Calu3 (cell line): ENCODE measurements at regions of chr7 and their contacts with region 1.

Region 1: GRCh38 chr7:73831755-73832651 is 1.2 kb downstream of the CLDN4 start:
- DNase-seq: peak; percentile 91
- H3K4me3 Mint-ChIP-seq: peak overlapping the region; percentile 91
- H3K27ac Mint-ChIP-seq: peak overlapping the region; percentile 92
- H3K4me1 Mint-ChIP-seq: peaks cover 30% of the 10 kb centered on the region
- H3K27me3 Mint-ChIP-seq: no peaks in the 10 kb centered on the region
- CTCF ChIP-seq: no peak

Region 2: DNA sequence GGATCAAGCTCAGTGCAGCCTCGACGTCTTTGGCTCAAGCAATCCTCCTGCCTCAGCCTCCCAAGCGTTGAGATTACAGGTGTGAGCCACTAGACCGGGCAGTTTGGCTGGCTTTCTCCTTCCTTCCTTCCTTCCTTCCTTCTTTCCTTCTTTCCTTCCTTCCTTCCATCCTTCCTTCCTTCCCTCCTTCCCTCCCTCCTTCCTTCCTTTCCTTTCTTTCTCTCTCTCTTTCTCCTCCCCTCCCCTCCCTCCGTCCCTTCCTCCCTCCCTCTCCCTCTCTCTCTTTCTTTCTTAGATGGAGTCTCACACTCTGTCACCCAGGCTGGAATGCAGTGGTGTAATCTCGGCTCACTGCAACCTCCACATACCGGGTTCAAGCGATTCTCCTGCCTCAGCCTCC is 172.0 kb before region 1 on chr7:
- CTCF ChIA-PET with region 1: no interaction called
- intact Hi-C with region 1: no loop called
- DNase-seq: no peak
- H3K4me3 Mint-ChIP-seq: no peak overlapping the region
- H3K27ac Mint-ChIP-seq: no peak overlapping the region
- H3K4me1 Mint-ChIP-seq: peaks cover 8% of the 10 kb centered on the region
- H3K27me3 Mint-ChIP-seq: peaks cover 15% of the 10 kb centered on the region
- CTCF ChIP-seq: no peak

Region 3: GRCh38 chr7:73742693-73743595 is 89.1 kb before region 1 on chr7:
- CTCF ChIA-PET with region 1: interaction called, 4 read pairs
- intact Hi-C with region 1: loop called (anchors 2 kb)
- DNase-seq: peak; percentile 97
- H3K4me3 Mint-ChIP-seq: peak overlapping the region; percentile 56
- H3K27ac Mint-ChIP-seq: peak overlapping the region; percentile 98
- H3K4me1 Mint-ChIP-seq: peaks cover 29% of the 10 kb centered on the region
- H3K27me3 Mint-ChIP-seq: no peaks in the 10 kb centered on the region
- CTCF ChIP-seq: no peak